BJ (cell line): ENCODE measurements at regions of chr3 and their contacts with region 1.

Region 1: GRCh38 chr3:69161587-69162307 is 39.4 kb upstream of the LMOD3 start:
- DNase-seq: no peak
- H3K4me3 ChIP-seq: no peak overlapping the region
- H3K27me3 ChIP-seq: no peaks in the 10 kb centered on the region
- CTCF ChIP-seq: peak; percentile 90

Region 2: DNA sequence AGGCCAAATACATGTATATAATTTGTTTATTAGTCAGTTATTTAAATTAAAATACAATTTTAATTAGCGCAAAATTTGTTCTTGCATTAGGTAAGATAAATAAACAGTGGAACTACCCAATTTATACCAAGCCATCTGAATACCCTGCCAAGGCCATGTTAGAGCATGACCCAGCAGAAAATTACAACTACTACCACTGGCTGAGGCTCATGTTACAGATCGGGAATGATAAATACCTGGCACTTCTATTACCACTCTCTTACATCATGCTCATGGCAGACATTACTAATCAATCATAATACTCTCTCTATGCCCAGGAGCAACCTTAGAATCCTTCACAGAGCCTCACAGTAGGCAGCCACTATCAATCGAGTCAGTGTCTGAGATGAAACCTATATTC is 18.1 kb before region 1 on chr3:
- CTCF ChIA-PET with region 1: interaction called, 15 read pairs
- POLR2A ChIA-PET with region 1: interaction called, 6 read pairs
- DNase-seq: no peak
- H3K4me3 ChIP-seq: no peak overlapping the region
- H3K27me3 ChIP-seq: peaks cover 1% of the 10 kb centered on the region; the same call in 1 of the 2 replicates
- CTCF ChIP-seq: no peak

Region 3: DNA sequence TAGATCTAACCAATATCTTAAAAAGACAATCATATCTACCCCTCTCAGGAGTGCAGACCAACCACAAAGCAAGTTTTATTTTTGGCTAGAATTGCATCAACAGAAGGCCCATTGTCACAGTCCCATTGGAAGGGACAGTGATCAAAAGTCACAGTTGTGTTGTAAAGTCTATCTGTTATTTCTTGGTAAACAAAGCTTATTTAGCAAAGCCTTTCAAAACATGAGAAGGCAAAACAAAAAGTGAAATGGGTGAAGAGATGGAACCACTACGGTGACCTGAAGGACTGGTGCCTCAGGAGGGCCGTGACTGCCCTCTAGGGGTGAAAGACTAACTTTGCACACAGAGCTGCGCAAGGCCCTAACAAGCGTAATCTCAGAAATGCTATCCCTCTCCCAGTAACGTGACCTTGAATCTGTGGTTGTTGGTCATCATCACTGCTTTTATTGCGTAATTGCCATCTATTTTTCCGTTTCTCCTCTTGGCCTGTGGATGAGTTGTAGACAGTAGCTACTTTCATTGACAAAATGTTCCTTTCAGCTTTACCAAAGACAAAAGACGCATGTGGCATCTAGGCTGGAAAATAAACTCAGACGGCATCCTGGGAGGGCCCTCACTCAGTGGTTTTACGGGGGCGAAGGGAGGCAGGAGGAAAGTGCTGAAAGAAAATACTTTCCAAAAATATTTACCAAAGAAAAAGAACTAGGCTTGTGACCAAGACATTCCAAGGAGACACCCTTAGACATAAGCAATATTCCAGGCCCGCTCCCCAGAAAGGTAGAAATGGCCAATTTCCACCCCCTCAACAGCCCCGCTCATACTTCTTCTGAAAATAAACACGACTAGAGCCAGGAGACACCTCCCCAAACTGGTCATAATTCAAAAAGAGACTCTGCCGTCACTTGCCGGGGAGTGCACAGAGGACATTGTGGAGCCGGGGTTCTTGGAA is 144.8 kb after region 1 on chr3:
- CTCF ChIA-PET with region 1: interaction called, 225 read pairs
- POLR2A ChIA-PET with region 1: no interaction called
- DNase-seq: peak; percentile 54
- H3K4me3 ChIP-seq: no peak overlapping the region
- H3K27me3 ChIP-seq: no peaks in the 10 kb centered on the region
- CTCF ChIP-seq: peak; percentile 91

Region 4: DNA sequence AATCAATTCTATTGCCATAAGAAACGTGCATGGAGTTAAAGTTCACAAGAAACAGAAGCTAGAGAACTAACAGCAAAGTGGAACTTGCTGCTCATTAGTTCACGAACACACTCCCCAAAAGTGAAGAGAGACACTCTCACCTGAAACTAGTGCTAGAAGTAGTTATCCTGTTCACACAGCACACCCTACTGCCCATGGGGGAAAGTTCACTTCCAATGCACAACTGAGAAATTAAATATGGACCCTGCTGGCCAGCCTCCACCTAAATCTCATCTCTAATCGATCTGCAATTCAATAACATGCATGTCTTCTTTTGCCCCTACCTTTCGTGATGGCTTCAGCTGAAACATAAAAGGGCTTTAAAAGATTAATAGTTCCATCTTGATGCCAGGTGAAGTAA is 263.5 kb after region 1 on chr3:
- CTCF ChIA-PET with region 1: interaction called, 24 read pairs
- POLR2A ChIA-PET with region 1: no interaction called
- DNase-seq: no peak
- H3K4me3 ChIP-seq: no peak overlapping the region
- H3K27me3 ChIP-seq: no peaks in the 10 kb centered on the region; the same call in 1 of the 2 replicates
- CTCF ChIP-seq: peak; percentile 59

Region 5: DNA sequence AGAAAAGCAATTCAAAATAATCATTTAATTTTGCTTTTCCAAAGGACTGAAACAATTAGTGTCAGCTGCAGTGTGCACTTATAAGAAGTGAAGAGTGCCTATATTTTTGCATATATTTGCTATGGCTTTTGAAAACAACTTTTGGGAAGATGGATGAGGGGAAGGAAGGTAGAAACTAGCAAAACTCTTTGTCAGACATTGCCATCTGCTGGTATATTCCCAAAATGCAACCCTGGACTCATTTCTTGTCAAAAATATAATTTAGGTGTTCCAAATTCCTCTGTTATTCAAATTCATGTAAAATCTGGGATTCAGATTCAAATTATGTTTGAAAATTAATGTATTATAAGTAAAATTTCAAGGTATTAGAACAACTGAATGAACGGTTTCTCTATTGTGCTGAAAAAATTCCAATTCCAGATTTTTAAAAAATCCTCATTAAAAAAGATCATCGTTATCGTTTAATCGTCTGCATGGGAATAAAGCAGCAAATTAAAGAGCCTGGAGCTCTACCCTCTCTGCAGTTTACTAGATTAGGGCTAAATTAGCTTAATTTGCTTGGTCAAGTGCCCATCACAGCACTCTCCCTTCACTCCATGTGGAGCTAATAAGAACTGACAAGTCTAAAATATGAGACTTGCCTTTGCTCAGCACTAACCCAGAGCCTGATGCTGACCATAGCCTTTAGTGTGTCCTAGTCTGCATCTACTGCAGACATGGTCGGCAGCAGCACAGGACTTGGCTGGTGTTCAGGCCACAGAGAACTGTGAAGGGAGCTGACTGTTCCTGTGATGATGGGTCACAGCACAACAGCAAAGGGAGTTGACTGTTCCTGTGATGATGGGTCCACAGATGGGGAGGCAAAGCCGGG is 509.6 kb after region 1 on chr3:
- CTCF ChIA-PET with region 1: interaction called, 14 read pairs
- POLR2A ChIA-PET with region 1: no interaction called
- DNase-seq: no peak
- H3K4me3 ChIP-seq: no peak overlapping the region
- H3K27me3 ChIP-seq: 0 out of 2 replicates have a peak, but pooled peaks cover 2% of the 10 kb centered on the region
- CTCF ChIP-seq: peak; percentile 69